ENCODE measurements at regions of chr2 and their contacts with region 1.

Region 1: DNA sequence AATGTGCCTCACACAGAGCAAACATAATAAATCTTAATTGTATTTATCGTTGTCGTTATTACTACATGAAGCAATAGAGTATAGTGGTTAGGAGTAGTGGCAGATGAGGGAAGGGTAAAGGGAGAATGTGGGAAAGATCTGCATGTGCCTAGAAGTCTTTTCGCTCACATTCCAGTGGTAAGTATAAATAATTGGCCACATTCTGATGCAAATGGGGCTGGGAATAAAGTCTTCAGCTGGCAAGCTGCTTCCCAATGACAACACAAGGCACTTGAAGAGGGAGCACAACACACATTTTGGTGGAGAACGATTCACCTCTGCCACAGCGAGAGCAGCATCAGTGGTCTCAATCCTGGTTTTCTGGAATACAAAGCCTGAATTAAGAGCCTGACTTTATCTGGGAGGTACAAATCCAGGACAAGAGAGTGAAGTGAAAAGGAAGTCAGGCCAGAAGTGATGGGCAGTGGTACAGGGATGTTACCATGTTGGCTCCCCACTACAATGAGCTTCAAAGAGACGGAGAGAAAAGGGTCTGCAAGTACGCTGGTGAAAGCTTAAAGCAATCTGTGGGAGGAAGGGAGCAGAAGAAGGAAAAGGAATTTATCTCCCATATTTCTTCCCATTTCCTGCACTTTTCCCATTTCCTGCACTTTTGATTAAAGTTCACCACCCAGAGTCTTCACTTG is 112.3 kb downstream of the ARHGAP15 start:
- DNase-seq: no peak
- H3K4me3 Mint-ChIP-seq: no peak overlapping the region
- H3K27ac Mint-ChIP-seq: no peak overlapping the region
- H3K4me1 Mint-ChIP-seq: peaks cover 11% of the 10 kb centered on the region
- H3K27me3 Mint-ChIP-seq: no peaks in the 10 kb centered on the region

Region 2: GRCh38 chr2:143110758-143111428 is 130.7 kb before region 1 on chr2:
- CTCF ChIA-PET with region 1: no interaction called
- POLR2A ChIA-PET with region 1: no interaction called
- DNase-seq: peak; percentile 73
- H3K4me3 Mint-ChIP-seq: peak overlapping the region; percentile 8
- H3K27ac Mint-ChIP-seq: peak overlapping the region; percentile 77
- H3K4me1 Mint-ChIP-seq: peaks cover 27% of the 10 kb centered on the region
- H3K27me3 Mint-ChIP-seq: peaks cover 4% of the 10 kb centered on the region

Region 3: DNA sequence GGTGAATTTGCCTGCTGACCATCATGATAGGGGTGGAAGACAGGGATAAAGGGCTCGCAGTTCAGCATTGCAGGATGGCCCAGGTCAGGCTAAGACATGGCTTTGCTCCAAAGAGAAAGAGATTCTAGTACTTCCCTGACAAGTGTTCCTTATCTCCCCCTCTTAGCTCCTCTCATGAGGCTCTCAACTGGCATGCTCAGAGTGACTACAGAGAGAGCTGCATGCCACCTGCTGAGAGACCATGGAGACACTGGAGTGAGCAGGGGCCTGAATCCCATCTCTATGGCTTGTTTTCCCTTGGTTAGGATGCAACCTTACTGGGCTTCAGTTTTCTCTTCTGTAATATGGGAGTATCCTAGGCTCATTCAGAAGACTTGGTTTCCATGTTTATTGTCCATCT is 18.0 kb before region 1 on chr2:
- CTCF ChIA-PET with region 1: interaction called, 11 read pairs
- POLR2A ChIA-PET with region 1: no interaction called
- DNase-seq: no peak
- H3K4me3 Mint-ChIP-seq: no peak overlapping the region
- H3K27ac Mint-ChIP-seq: no peak overlapping the region
- H3K4me1 Mint-ChIP-seq: peaks cover 48% of the 10 kb centered on the region
- H3K27me3 Mint-ChIP-seq: no peaks in the 10 kb centered on the region